ENCODE measurements at regions of chr2 and their contacts with region 1.

Region 1: DNA sequence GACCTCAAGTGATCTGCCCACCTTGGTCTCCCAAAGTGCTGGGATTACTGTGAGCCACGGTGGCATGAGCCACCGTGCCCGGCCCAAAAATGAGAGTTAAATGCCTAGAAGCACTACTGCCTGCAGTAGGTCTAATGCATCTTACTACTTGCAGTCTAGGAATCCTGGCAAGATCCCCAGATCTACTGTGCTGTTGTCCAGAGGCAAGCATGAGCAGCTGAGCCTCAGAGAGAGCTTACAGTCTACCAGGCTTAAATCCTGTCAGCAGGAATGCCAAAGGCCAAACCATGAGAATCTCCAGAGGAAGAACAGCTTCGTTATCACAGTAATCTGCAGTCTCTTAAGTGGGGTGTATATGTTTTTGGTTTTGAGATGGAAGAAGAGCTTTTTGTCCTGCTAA is 54.4 kb downstream of the XRCC5 start:
- DNase-seq: no peak
- H3K4me3 ChIP-seq: no peak overlapping the region
- H3K4me3 Mint-ChIP-seq: no peak overlapping the region
- H3K27ac ChIP-seq: no peak overlapping the region
- H3K27ac Mint-ChIP-seq: peak overlapping the region in 3 of 7 donors; percentile 8 to 70 (median 37)
- H3K4me1 ChIP-seq: no peaks in the 10 kb centered on the region
- H3K4me1 Mint-ChIP-seq: peaks cover 6 to 16% (median 14%) of the 10 kb centered on the region in 4 donors
- H3K27me3 ChIP-seq: no peaks in the 10 kb centered on the region
- H3K27me3 Mint-ChIP-seq: no peaks in the 10 kb centered on the region

Region 2: GRCh38 chr2:215920244-215921100 is 243.0 kb before region 1 on chr2:
- CTCF ChIA-PET with region 1: no interaction called
- POLR2A ChIA-PET with region 1: no interaction called
- intact Hi-C with region 1: no loop called
- DNase-seq: peak; percentile 43 to 50 (median 46)
- H3K4me3 ChIP-seq: no peak overlapping the region
- H3K4me3 Mint-ChIP-seq: no peak overlapping the region
- H3K27ac ChIP-seq: no peak overlapping the region
- H3K27ac Mint-ChIP-seq: no peak overlapping the region
- H3K4me1 ChIP-seq: no peaks in the 10 kb centered on the region
- H3K4me1 Mint-ChIP-seq: no peaks in the 10 kb centered on the region
- H3K27me3 ChIP-seq: no peaks in the 10 kb centered on the region
- H3K27me3 Mint-ChIP-seq: peaks cover 4 to 8% of the 10 kb centered on the region in 2 donors

Region 3: GRCh38 chr2:216121255-216121654 is 42.3 kb before region 1 on chr2:
- CTCF ChIA-PET with region 1: no interaction called
- POLR2A ChIA-PET with region 1: no interaction called
- intact Hi-C with region 1: loop called (anchors 1 kb)
- DNase-seq: no peak
- H3K4me3 ChIP-seq: no peak overlapping the region
- H3K4me3 Mint-ChIP-seq: no peak overlapping the region
- H3K27ac ChIP-seq: no peak overlapping the region
- H3K27ac Mint-ChIP-seq: peak overlapping the region in 4 of 7 donors; percentile 48 to 68 (median 55)
- H3K4me1 ChIP-seq: peaks cover 50% of the 10 kb centered on the region
- H3K4me1 Mint-ChIP-seq: peaks cover 41 to 59% (median 47%) of the 10 kb centered on the region in 4 donors
- H3K27me3 ChIP-seq: no peaks in the 10 kb centered on the region
- H3K27me3 Mint-ChIP-seq: no peaks in the 10 kb centered on the region